ENCODE measurements at regions of chr2 and their contacts with region 1.

Region 1: GRCh38 chr2:15939854-15940660 is at the start of gene MYCN:
- H3K4me3 Mint-ChIP-seq: peak within 1 kb of the TSS; percentile 66
- H3K27ac Mint-ChIP-seq: no peak within 1 kb of the TSS
- H3K4me1 Mint-ChIP-seq: peaks cover 23% of the 10 kb centered on the region
- H3K27me3 Mint-ChIP-seq: peaks cover 73% of the 10 kb centered on the region

Region 2: GRCh38 chr2:15636972-15637785 is 302.9 kb before region 1 on chr2:
- intact Hi-C with region 1: loop called (anchors 5 kb)
- H3K4me3 Mint-ChIP-seq: no peak overlapping the region
- H3K27ac Mint-ChIP-seq: no peak overlapping the region
- H3K4me1 Mint-ChIP-seq: peaks cover 8% of the 10 kb centered on the region
- H3K27me3 Mint-ChIP-seq: no peaks in the 10 kb centered on the region

Region 3: GRCh38 chr2:15860760-15861159 is 79.3 kb before region 1 on chr2:
- intact Hi-C with region 1: no loop called
- H3K4me3 Mint-ChIP-seq: no peak overlapping the region
- H3K27ac Mint-ChIP-seq: no peak overlapping the region
- H3K4me1 Mint-ChIP-seq: no peaks in the 10 kb centered on the region
- H3K27me3 Mint-ChIP-seq: no peaks in the 10 kb centered on the region

Region 4: DNA sequence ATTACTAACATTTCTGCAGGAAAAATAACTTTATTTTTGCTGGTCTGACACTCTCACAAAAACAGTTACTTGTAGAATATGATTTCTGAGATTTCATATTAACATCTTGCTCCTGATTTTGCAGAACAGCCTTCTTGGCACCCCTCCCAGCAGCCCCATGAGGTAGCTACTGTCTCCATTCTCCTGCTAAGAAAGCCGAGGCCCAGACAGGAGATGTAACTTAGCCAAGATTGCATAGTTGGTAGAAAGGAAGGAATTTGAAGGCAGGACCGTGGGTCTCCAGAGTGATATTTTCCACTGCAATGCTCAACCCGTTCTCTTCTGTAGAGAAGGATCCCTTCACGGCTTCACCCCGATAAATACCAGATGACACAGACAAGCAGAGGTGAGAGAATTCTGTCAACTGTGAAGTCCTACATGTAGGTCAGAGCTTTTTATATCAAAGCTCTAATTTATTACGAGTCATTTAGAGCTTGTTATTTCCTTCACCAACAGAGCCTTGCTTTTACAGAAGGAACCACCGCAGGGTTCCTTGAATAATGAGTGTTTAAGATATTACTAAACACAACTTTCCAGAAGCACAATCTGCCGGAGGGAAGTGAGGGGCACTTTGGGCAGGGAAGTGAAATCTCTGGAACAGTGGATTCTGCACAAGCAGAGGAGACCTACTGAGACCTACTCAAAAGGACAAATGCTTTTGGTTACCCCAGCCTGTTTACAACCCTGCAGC is 47.7 kb before region 1 on chr2:
- intact Hi-C with region 1: no loop called
- H3K4me3 Mint-ChIP-seq: no peak overlapping the region
- H3K27ac Mint-ChIP-seq: no peak overlapping the region
- H3K4me1 Mint-ChIP-seq: no peaks in the 10 kb centered on the region
- H3K27me3 Mint-ChIP-seq: no peaks in the 10 kb centered on the region

Region 5: GRCh38 chr2:16218625-16219024 is 278.6 kb after region 1 on chr2:
- intact Hi-C with region 1: loop called (anchors 2 kb)
- H3K4me3 Mint-ChIP-seq: no peak overlapping the region
- H3K27ac Mint-ChIP-seq: no peak overlapping the region
- H3K4me1 Mint-ChIP-seq: no peaks in the 10 kb centered on the region
- H3K27me3 Mint-ChIP-seq: no peaks in the 10 kb centered on the region

Region 6: DNA sequence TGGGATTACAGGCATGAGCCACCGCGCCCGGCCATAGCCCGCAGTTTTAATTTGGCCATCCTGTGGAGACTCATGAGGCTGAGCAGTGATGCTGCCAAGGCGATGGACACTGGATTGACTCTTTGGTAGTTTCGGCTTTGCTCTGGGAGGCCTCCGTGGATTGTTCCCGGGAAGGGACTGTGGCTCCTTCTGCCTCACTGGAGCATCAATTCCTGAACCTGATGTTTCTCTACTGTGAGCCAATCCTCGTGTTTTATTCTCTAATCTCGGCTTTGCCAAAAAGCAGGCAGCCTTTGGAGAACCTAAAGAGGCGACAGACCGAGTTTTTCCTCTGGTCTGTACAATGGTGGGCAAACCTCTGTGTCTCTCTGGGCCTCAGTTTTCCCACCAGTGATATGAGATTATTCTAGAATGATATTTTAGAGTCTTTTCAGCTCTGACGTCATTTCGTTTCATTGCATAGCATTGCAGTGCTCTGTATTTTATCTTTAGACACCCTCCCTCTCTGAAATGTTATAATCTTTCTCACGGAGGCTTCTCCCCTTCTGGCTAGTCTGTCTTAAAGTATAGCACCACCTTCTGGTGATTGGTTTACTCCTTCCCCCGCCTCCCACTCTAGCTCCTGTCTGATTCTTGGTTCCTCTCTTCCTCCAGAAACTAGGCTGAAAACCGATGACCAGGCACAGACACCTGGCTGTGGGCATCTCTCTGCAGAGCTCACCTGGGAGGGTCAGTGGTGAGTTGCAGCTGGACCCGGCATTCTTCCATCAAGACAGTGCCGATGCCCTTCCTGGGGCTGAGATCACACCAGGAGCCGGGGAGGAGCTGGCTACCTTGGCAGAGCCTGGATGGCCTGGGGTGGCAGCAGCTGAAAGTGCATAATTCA is 341.6 kb after region 1 on chr2:
- intact Hi-C with region 1: loop called (anchors 2 kb)
- H3K4me3 Mint-ChIP-seq: no peak overlapping the region
- H3K27ac Mint-ChIP-seq: no peak overlapping the region
- H3K4me1 Mint-ChIP-seq: no peaks in the 10 kb centered on the region
- H3K27me3 Mint-ChIP-seq: no peaks in the 10 kb centered on the region

Region 7: GRCh38 chr2:16487686-16488085 is 547.6 kb after region 1 on chr2:
- intact Hi-C with region 1: loop called (anchors 5 kb)
- H3K4me3 Mint-ChIP-seq: no peak overlapping the region
- H3K27ac Mint-ChIP-seq: no peak overlapping the region
- H3K4me1 Mint-ChIP-seq: no peaks in the 10 kb centered on the region
- H3K27me3 Mint-ChIP-seq: peaks cover 3% of the 10 kb centered on the region

Region 8: GRCh38 chr2:16507655-16508489 is 567.8 kb after region 1 on chr2:
- intact Hi-C with region 1: loop called (anchors 2 kb)
- H3K4me3 Mint-ChIP-seq: peak overlapping the region; percentile 53
- H3K27ac Mint-ChIP-seq: no peak overlapping the region
- H3K4me1 Mint-ChIP-seq: no peaks in the 10 kb centered on the region
- H3K27me3 Mint-ChIP-seq: peaks cover 36% of the 10 kb centered on the region